ENCODE measurements at regions of chr2 and their contacts with region 1.

Region 1: GRCh38 chr2:143259368-143259958 is 130.2 kb downstream of the ARHGAP15 start:
- DNase-seq: peak; percentile 89
- H3K4me3 Mint-ChIP-seq: peak overlapping the region; percentile 59
- H3K27ac Mint-ChIP-seq: peak overlapping the region; percentile 90
- H3K4me1 Mint-ChIP-seq: peaks cover 73% of the 10 kb centered on the region
- H3K27me3 Mint-ChIP-seq: no peaks in the 10 kb centered on the region

Region 2: GRCh38 chr2:143083636-143084035 is 175.8 kb before region 1 on chr2:
- CTCF ChIA-PET with region 1: interaction called, 3 read pairs
- intact Hi-C with region 1: loop called (anchors 1 kb)
- DNase-seq: peak; percentile 15
- H3K4me3 Mint-ChIP-seq: no peak overlapping the region
- H3K27ac Mint-ChIP-seq: no peak overlapping the region
- H3K4me1 Mint-ChIP-seq: peaks cover 27% of the 10 kb centered on the region
- H3K27me3 Mint-ChIP-seq: no peaks in the 10 kb centered on the region

Region 3: GRCh38 chr2:143177096-143177786 is 82.2 kb before region 1 on chr2:
- CTCF ChIA-PET with region 1: interaction called, 10 read pairs
- intact Hi-C with region 1: no loop called
- DNase-seq: no peak
- H3K4me3 Mint-ChIP-seq: peak overlapping the region; percentile 55
- H3K27ac Mint-ChIP-seq: peak overlapping the region; percentile 67
- H3K4me1 Mint-ChIP-seq: peaks cover 52% of the 10 kb centered on the region
- H3K27me3 Mint-ChIP-seq: no peaks in the 10 kb centered on the region

Region 4: DNA sequence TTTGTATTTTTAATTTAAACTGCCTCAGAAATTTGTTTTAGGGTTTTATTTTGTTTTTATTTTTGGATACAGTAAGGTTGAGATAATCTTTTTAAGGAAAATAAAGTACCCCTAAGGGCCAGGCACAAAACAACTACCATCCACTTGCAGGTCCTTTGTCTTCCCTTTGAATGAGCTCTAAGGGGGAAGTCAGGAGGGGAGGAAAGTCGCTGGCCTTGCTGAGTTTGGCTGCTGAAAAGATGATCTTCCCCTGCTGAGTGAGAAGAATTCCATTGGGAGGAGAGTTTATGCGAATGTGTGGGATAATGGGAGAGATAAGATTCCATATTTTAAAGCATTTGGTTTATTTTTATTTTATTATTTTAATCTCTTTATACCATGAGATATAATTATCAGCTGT is 29.5 kb before region 1 on chr2:
- CTCF ChIA-PET with region 1: interaction called, 10 read pairs
- intact Hi-C with region 1: loop called (anchors 1 kb)
- DNase-seq: no peak
- H3K4me3 Mint-ChIP-seq: no peak overlapping the region
- H3K27ac Mint-ChIP-seq: no peak overlapping the region
- H3K4me1 Mint-ChIP-seq: peaks cover 20% of the 10 kb centered on the region
- H3K27me3 Mint-ChIP-seq: no peaks in the 10 kb centered on the region

Region 5: DNA sequence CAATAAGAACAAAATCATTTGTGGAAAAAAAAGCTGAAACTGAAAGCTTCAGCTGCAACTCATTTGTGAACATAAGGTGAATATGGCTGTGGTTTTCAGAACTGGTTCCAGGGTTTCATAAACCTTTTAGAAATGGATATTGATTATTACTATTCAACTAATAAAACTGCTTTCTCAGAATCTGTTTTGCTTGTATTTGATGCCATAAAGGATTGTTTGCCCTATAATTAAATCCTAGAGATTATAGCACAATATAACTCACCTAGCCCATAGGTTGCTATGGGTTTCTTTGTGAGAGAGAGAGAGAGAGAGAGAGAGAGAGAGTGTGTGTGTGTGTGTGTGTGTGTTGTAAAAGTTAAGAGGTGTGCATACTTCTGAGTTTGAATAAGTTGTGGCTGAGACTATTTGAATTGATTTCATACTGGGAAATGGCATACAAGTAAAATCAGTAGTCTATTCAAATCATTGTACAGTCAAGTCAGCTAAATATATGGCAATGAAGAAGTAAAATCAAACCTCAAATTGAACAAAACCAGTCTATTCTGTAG is 209.0 kb after region 1 on chr2:
- CTCF ChIA-PET with region 1: no interaction called
- intact Hi-C with region 1: loop called (anchors 2 kb)
- DNase-seq: no peak
- H3K4me3 Mint-ChIP-seq: peak overlapping the region; percentile 12
- H3K27ac Mint-ChIP-seq: peak overlapping the region; percentile 50
- H3K4me1 Mint-ChIP-seq: peaks cover 28% of the 10 kb centered on the region
- H3K27me3 Mint-ChIP-seq: no peaks in the 10 kb centered on the region

Region 6: GRCh38 chr2:144332356-144333142 is 1073.1 kb after region 1 on chr2:
- CTCF ChIA-PET with region 1: no interaction called
- intact Hi-C with region 1: loop called (anchors 5 kb)
- DNase-seq: peak; percentile 83
- H3K4me3 Mint-ChIP-seq: peak overlapping the region; percentile 79
- H3K27ac Mint-ChIP-seq: peak overlapping the region; percentile 78
- H3K4me1 Mint-ChIP-seq: peaks cover 19% of the 10 kb centered on the region
- H3K27me3 Mint-ChIP-seq: no peaks in the 10 kb centered on the region